GM10248 (cell line): ENCODE measurements at regions of chr13 and their contacts with region 1.

Region 1: DNA sequence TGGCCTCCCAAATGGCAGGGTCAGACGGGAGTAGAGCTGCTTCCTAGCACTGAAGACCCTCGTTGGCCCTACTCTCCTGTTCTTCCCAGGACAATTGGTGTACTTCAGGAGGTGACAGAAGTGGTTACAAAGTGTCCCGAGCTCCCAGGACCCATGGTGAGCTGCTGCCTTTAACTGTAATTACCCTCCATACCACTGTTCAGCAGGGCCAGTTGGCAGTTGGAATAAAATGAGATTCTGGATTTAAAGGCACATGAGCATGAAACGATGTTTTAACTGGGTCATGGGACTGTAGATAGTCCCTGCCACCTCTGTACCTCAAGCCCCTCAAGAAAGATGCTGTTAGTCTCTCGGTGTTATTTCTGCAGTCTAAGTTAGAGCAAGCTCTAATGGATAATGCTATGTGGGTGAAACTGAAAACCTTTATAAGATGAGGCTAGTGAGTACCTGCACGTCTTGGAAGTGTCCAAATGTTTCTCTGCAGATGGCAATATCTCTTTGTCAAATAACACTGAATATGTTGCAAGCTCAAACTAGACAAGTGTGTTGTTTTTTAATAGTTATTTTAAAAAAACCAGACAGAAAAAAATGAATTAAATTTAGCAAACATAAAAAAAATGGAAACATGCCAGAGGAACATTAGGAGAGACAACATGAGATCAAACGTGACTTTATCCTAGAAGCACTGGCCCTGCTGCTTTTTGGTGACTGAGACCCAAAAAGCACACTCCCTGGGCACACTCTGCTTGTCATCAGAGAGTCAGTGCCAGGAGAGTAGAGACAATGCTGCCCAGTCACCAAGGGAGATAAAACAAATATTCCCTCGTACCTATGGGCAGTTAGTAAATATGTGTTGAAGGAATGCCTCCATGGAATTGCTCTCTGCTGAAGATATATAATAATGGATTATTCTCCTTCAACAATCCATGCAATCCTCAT is 266.3 kb downstream of the LMO7 start:
- DNase-seq: no peak
- CTCF ChIP-seq: no peak

Region 2: DNA sequence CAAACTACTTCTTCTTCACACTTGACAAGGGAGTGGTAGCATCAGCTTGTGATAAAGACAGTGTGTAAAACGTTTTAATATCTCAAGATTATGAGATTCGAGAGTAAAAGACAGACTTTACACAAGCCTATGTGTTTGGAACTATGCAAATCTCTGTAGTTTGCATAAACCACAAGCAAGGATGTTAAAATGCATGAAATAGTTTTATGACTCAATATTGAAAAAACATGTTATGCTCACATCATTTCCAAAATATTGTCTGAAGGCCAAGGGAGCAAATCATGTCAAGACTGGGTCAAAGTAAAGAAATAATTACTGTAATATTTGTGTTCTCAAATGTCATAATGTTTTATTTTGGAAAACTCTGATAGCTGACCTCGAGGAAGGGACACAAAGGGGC is 1451.5 kb before region 1 on chr13:
- CTCF ChIA-PET with region 1: no interaction called
- POLR2A ChIA-PET with region 1: no interaction called
- DNase-seq: no peak
- CTCF ChIP-seq: no peak

Region 3: GRCh38 chr13:75889427-75889826 is 13.0 kb before region 1 on chr13:
- CTCF ChIA-PET with region 1: interaction called, 10 read pairs
- POLR2A ChIA-PET with region 1: no interaction called
- DNase-seq: no peak
- CTCF ChIP-seq: no peak